Tibial artery (tissue), 4 donors: ENCODE measurements at regions of chr5 and their contacts with region 1.

Region 1: DNA sequence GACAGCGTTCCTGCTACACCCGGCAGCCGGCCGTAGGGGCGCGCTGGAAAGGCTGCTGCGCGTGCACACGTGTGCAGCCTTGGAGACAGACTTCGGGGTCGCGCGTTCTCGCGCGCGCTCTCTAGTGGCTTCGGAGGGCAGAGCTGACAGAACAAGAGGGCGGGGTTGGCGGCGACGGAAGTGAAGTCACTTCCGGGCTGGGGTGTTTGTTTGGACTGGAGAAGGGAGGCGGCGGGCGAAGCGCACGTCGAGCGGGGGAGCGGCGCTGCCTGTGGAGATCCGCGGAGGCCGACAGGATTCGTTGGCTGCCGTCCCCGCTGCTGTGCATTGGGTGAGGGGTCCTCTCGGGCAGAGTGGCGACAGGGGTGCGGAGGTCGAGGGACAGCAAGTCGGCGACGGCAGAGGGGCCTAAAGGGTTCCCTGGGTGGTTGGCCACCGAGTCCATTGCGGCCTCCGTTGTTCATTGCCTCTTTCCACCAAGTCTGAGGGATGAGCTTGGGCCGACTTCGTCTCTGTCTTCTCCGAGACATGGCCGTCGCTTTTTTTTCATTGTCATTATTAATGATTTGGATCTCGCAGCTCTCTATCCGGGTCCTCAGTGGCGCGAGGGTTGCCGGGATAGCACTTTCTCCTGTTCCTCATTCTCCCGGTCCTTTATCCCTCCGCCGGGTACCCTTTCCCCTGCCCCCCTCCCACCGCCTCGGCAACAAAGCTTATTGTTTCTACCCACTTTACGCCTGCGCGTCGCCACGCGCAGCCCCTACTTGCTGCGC is at the start of gene PAIP2:
- DNase-seq: peak; percentile 98
- H3K4me3 ChIP-seq: peak within 1 kb of the TSS; percentile 77 to 92
- H3K27ac ChIP-seq: peak within 1 kb of the TSS; percentile 94 to 98
- H3K4me1 ChIP-seq: peaks cover 0 to 46% (median 19%) of the 10 kb centered on the region in 4 donors
- H3K27me3 ChIP-seq: no peaks in the 10 kb centered on the region
- CTCF ChIP-seq: peak; percentile 72 to 73

Region 2: GRCh38 chr5:139273572-139274289 is 68.1 kb before region 1 on chr5:
- intact Hi-C with region 1: no loop called
- DNase-seq: peak; percentile 81 to 91
- H3K4me3 ChIP-seq: peak overlapping the region; percentile 56 to 62
- H3K27ac ChIP-seq: peak overlapping the region; percentile 57 to 62
- H3K4me1 ChIP-seq: peaks cover 0 to 25% (median 14%) of the 10 kb centered on the region in 4 donors
- H3K27me3 ChIP-seq: no peaks in the 10 kb centered on the region
- CTCF ChIP-seq: peak; percentile 28 to 33

Region 3: GRCh38 chr5:139293504-139294373 is 48.1 kb before region 1 on chr5 and contains the start of gene MATR3:
- intact Hi-C with region 1: loop called (anchors 5 kb)
- DNase-seq: peak; percentile 94 to 98
- H3K4me3 ChIP-seq: peak within 1 kb of the TSS; percentile 76 to 97
- H3K27ac ChIP-seq: peak within 1 kb of the TSS; percentile 98 to 100
- H3K4me1 ChIP-seq: peaks cover 0 to 43% (median 29%) of the 10 kb centered on the region in 4 donors
- H3K27me3 ChIP-seq: no peaks in the 10 kb centered on the region
- CTCF ChIP-seq: no peak